ENCODE measurements at regions of chr2 and their contacts with region 1.

Region 1: GRCh38 chr2:46666044-46666679 is 186.8 kb downstream of the TMEM247 start:
- DNase-seq: peak in 5 of 7 donors; percentile 13 to 60 (median 39)
- H3K4me3 ChIP-seq: no peak overlapping the region
- H3K27ac ChIP-seq: peak overlapping the region in 1 of 5 donors; percentile 1
- H3K4me1 ChIP-seq: no peaks in the 10 kb centered on the region
- H3K27me3 ChIP-seq: no peaks in the 10 kb centered on the region
- CTCF ChIP-seq: no peak
- POLR2A ChIP-seq: no peak

Region 2: DNA sequence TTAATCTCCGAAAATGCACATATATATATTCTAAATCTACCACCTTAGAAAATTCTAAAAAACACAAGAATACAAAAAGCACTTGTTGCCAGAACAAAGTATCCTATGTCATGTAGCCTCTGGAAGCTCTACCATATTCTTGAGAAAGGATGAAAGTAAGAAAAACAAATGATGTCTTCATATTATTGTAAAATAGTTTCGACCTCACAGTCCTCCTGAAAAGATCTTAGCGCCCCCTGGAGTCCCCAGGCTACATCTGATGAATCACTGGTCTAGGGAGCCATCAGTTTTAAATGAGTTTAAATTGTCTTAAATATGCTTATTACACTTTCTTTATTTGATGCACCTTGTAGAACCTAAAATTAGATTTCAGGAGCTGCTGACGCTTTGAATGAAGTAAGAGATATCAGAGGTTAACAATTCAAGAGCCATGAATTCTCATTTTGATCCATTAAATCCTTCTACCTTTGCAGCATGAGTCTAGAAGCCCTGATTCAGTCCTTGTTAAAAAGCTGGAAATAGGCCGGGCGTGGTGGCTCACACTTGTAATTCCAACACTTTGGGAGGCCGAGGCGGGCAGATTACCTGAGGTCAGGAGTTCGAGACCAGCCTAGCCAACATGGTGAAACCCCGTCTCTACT is 110.6 kb after region 1 on chr2:
- intact Hi-C with region 1: loop called in 1 of 2 experiments (anchors 10 kb)
- DNase-seq: peak; percentile 53 to 86 (median 77)
- H3K4me3 ChIP-seq: no peak overlapping the region
- H3K27ac ChIP-seq: no peak overlapping the region
- H3K4me1 ChIP-seq: peaks cover 0 to 20% of the 10 kb centered on the region in 2 donors
- H3K27me3 ChIP-seq: no peaks in the 10 kb centered on the region
- CTCF ChIP-seq: peak; percentile 55 to 76 (median 61)
- POLR2A ChIP-seq: no peak

Measured in adrenal gland (tissue), 19 donors.